MCF 10A (cell line): ENCODE measurements at regions of chr18 and their contacts with region 1.

Region 1: GRCh38 chr18:27363872-27364271 is 178.8 kb upstream of the CHST9 start:
- DNase-seq: peak; percentile 34
- H3K4me3 Mint-ChIP-seq: no peak overlapping the region
- H3K27ac Mint-ChIP-seq: no peak overlapping the region
- H3K4me1 Mint-ChIP-seq: no peaks in the 10 kb centered on the region
- H3K27me3 Mint-ChIP-seq: peaks cover 14% of the 10 kb centered on the region
- CTCF ChIP-seq: peak; percentile 39

Region 2: DNA sequence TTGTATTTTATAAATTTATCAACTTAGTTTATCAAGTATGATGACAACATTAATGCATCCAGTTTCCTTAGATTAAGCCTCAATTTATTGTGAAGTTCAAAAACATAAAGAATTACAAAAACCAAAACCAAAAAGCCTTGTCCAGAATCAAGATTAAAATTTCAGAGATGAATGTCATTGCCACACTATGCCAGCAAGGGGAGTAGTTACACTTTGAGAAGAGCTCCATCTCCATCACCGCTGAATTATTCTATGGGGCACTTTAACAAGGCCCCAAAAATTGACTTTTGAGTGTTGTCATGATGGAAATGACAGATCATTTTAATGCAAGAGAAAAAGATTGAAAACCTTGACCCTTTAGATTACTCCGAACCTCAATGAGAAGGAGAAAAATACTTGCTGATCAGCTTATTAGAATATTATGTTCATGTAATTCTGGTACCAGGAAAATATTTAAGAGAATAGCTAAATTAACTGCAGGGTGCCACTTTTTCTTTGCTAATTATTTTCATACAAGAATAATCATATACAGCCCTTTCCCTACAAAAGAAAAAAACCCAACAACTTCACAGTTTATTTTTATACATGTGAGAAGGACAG is 345.9 kb before region 1 on chr18:
- CTCF ChIA-PET with region 1: interaction called, 8 read pairs
- POLR2A ChIA-PET with region 1: no interaction called
- intact Hi-C with region 1: loop called (anchors 1 kb)
- DNase-seq: peak; percentile 46
- H3K4me3 Mint-ChIP-seq: no peak overlapping the region
- H3K27ac Mint-ChIP-seq: no peak overlapping the region
- H3K4me1 Mint-ChIP-seq: no peaks in the 10 kb centered on the region
- H3K27me3 Mint-ChIP-seq: no peaks in the 10 kb centered on the region
- CTCF ChIP-seq: peak; percentile 69

Region 3: GRCh38 chr18:27312153-27312552 is 51.7 kb before region 1 on chr18:
- CTCF ChIA-PET with region 1: no interaction called
- POLR2A ChIA-PET with region 1: no interaction called
- intact Hi-C with region 1: no loop called
- DNase-seq: no peak
- H3K4me3 Mint-ChIP-seq: no peak overlapping the region
- H3K27ac Mint-ChIP-seq: no peak overlapping the region
- H3K4me1 Mint-ChIP-seq: no peaks in the 10 kb centered on the region
- H3K27me3 Mint-ChIP-seq: no peaks in the 10 kb centered on the region
- CTCF ChIP-seq: no peak

Region 4: DNA sequence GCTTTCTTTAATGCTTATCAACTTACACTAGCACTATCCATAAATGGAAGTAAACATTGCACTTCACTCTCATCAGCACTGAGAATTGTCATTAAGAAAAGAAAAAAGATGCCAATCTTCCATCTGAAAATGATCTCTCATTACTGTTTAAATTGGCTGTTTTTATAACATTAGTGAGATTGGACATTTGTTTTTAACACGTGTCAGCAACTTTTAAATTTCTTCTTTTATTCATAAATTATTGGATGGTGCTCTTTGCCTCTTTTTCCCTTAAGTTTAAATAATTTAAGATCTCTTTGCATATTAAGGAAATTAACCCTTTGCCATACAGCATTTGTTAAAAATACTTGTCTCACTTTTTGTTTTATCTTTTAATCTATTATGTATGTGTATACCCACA is 32.3 kb before region 1 on chr18:
- CTCF ChIA-PET with region 1: no interaction called
- POLR2A ChIA-PET with region 1: no interaction called
- intact Hi-C with region 1: no loop called
- DNase-seq: no peak
- H3K4me3 Mint-ChIP-seq: no peak overlapping the region
- H3K27ac Mint-ChIP-seq: no peak overlapping the region
- H3K4me1 Mint-ChIP-seq: no peaks in the 10 kb centered on the region
- H3K27me3 Mint-ChIP-seq: peaks cover 24% of the 10 kb centered on the region
- CTCF ChIP-seq: no peak

Region 5: DNA sequence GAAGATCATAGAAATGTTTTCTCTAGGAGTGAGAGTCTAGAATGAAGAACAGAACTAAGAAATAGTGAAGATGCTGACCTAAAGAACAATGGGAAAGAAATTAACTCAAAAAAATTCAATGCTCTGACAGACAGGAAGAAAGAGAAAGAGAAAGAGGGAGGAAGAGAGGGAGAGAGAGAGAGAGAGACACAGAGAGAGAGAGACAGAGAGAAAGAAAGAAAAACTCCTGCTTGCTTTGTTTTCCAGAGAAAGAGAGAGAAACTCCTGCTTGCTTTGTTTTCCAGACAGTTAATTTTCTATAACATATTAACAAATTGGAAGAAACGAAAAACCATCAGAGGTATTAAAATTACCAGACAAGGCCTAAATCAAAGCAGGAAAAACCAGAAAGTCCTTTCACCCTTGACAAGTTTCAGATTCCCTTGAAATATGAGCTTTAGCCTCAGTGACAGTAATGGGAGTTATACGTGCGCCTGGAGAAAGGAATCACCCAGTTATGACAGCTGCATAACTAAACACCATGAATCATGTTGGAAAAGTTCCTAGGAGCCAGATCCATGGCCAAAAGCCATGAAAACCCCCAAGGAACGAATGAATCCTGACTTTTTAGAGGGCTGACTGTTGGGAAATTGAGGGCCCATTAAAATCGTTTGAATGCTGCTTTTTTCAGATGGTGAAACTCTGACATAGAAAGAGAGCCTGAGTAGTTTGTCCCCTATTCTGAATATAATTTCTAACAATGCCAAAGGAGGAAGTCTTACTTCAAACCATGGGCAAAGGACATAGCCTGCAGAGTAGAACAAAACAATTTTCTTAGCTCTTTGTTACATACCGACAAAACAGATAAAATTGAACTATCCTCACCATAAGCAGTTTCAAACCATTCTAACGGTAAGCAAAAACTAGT is 49.9 kb after region 1 on chr18:
- CTCF ChIA-PET with region 1: no interaction called
- POLR2A ChIA-PET with region 1: no interaction called
- intact Hi-C with region 1: no loop called
- DNase-seq: peak; percentile 79
- H3K4me3 Mint-ChIP-seq: no peak overlapping the region
- H3K27ac Mint-ChIP-seq: no peak overlapping the region
- H3K4me1 Mint-ChIP-seq: peaks cover 6% of the 10 kb centered on the region
- H3K27me3 Mint-ChIP-seq: no peaks in the 10 kb centered on the region
- CTCF ChIP-seq: no peak

Region 6: GRCh38 chr18:27428120-27428519 is 64.2 kb after region 1 on chr18:
- CTCF ChIA-PET with region 1: interaction called, 5 read pairs
- POLR2A ChIA-PET with region 1: no interaction called
- intact Hi-C with region 1: loop called (anchors 5 kb)
- DNase-seq: no peak
- H3K4me3 Mint-ChIP-seq: no peak overlapping the region
- H3K27ac Mint-ChIP-seq: no peak overlapping the region
- H3K4me1 Mint-ChIP-seq: no peaks in the 10 kb centered on the region
- H3K27me3 Mint-ChIP-seq: peaks cover 4% of the 10 kb centered on the region
- CTCF ChIP-seq: no peak

Region 7: GRCh38 chr18:27605107-27605834 is 241.4 kb after region 1 on chr18:
- CTCF ChIA-PET with region 1: interaction called, 75 read pairs
- POLR2A ChIA-PET with region 1: no interaction called
- intact Hi-C with region 1: no loop called
- DNase-seq: peak; percentile 78
- H3K4me3 Mint-ChIP-seq: no peak overlapping the region
- H3K27ac Mint-ChIP-seq: no peak overlapping the region
- H3K4me1 Mint-ChIP-seq: peaks cover 5% of the 10 kb centered on the region
- H3K27me3 Mint-ChIP-seq: no peaks in the 10 kb centered on the region
- CTCF ChIP-seq: peak; percentile 72

Region 8: DNA sequence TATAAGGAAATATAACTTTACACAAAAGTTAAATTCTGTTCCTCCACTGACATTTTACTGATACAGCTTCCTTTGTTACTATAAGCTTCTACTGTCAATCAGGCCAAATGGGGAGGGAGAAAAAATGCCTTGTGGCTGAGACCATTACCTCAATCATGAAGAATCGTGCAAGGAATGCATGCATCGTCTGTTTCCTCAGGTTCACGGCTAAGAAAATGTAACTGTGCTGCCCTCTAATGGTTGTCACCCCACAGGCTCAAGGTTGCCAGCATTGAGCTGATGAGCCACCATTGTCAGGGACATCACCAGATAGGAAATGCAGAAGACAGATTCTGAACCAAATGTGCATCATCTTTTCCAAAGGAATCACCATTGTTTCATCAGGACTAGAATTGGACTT is 386.1 kb after region 1 on chr18:
- CTCF ChIA-PET with region 1: interaction called, 3 read pairs
- POLR2A ChIA-PET with region 1: no interaction called
- intact Hi-C with region 1: loop called (anchors 5 kb)
- DNase-seq: peak; percentile 67
- H3K4me3 Mint-ChIP-seq: no peak overlapping the region
- H3K27ac Mint-ChIP-seq: no peak overlapping the region
- H3K4me1 Mint-ChIP-seq: no peaks in the 10 kb centered on the region
- H3K27me3 Mint-ChIP-seq: peaks cover 12% of the 10 kb centered on the region
- CTCF ChIP-seq: peak; percentile 60

Region 9: GRCh38 chr18:28594034-28594433 is 1230.2 kb after region 1 on chr18:
- CTCF ChIA-PET with region 1: no interaction called
- POLR2A ChIA-PET with region 1: no interaction called
- intact Hi-C with region 1: no loop called
- DNase-seq: no peak
- H3K4me3 Mint-ChIP-seq: no peak overlapping the region
- H3K27ac Mint-ChIP-seq: no peak overlapping the region
- H3K4me1 Mint-ChIP-seq: no peaks in the 10 kb centered on the region
- H3K27me3 Mint-ChIP-seq: no peaks in the 10 kb centered on the region
- CTCF ChIP-seq: no peak